ENCODE measurements at regions of chrX and their contacts with region 1.

Region 1: GRCh38 chrX:27555514-27555913 is 34.6 kb upstream of the DCAF8L2 start:
- DNase-seq: peak; percentile 41
- ATAC-seq: peak; percentile 79
- H3K4me3 ChIP-seq: no peak overlapping the region
- H3K27ac ChIP-seq: no peak overlapping the region
- H3K4me1 ChIP-seq: no peaks in the 10 kb centered on the region
- H3K27me3 ChIP-seq: no peaks in the 10 kb centered on the region
- CTCF ChIP-seq: peak; percentile 74
- EP300 ChIP-seq: no peak
- POLR2A ChIP-seq: no peak
- RAD21 ChIP-seq: 0 out of 2 replicates have a peak, but pooled peaks have one; percentile 16

Region 2: GRCh38 chrX:27619975-27620374 is 64.5 kb after region 1 on chrX:
- CTCF ChIA-PET with region 1: interaction called, 7 read pairs
- POLR2A ChIA-PET with region 1: no interaction called
- in situ Hi-C with region 1: loop called (anchors 10 kb)
- intact Hi-C with region 1: loop called (anchors 1 kb)
- DNase-seq: peak; percentile 5
- ATAC-seq: no peak
- H3K4me3 ChIP-seq: no peak overlapping the region
- H3K27ac ChIP-seq: no peak overlapping the region
- H3K4me1 ChIP-seq: no peaks in the 10 kb centered on the region
- H3K27me3 ChIP-seq: no peaks in the 10 kb centered on the region
- CTCF ChIP-seq: peak; percentile 41
- EP300 ChIP-seq: no peak
- POLR2A ChIP-seq: no peak
- RAD21 ChIP-seq: no peak

Region 3: GRCh38 chrX:27675493-27675892 is 120.0 kb after region 1 on chrX:
- CTCF ChIA-PET with region 1: no interaction called
- POLR2A ChIA-PET with region 1: no interaction called
- in situ Hi-C with region 1: no loop called
- intact Hi-C with region 1: loop called (anchors 2 kb)
- DNase-seq: no peak
- ATAC-seq: no peak
- H3K4me3 ChIP-seq: no peak overlapping the region
- H3K27ac ChIP-seq: no peak overlapping the region
- H3K4me1 ChIP-seq: no peaks in the 10 kb centered on the region
- H3K27me3 ChIP-seq: no peaks in the 10 kb centered on the region
- CTCF ChIP-seq: no peak
- EP300 ChIP-seq: no peak
- POLR2A ChIP-seq: no peak
- RAD21 ChIP-seq: no peak